ENCODE measurements at regions of chr9 and their contacts with region 1.

Region 1: GRCh38 chr9:113876151-113876992 is at the start of gene ZNF618:
- DNase-seq: peak; percentile 55 to 81
- ATAC-seq: peak; percentile 47
- H3K4me3 ChIP-seq: peak within 1 kb of the TSS; percentile 93 to 100
- H3K27ac ChIP-seq: no peak within 1 kb of the TSS
- H3K4me1 ChIP-seq: peaks cover 0 to 3% of the 10 kb centered on the region in 2 donors
- H3K27me3 ChIP-seq: no peaks in the 10 kb centered on the region
- total RNA-seq, gene ZNF618: 15.4 to 17.3 TPM

Region 2: DNA sequence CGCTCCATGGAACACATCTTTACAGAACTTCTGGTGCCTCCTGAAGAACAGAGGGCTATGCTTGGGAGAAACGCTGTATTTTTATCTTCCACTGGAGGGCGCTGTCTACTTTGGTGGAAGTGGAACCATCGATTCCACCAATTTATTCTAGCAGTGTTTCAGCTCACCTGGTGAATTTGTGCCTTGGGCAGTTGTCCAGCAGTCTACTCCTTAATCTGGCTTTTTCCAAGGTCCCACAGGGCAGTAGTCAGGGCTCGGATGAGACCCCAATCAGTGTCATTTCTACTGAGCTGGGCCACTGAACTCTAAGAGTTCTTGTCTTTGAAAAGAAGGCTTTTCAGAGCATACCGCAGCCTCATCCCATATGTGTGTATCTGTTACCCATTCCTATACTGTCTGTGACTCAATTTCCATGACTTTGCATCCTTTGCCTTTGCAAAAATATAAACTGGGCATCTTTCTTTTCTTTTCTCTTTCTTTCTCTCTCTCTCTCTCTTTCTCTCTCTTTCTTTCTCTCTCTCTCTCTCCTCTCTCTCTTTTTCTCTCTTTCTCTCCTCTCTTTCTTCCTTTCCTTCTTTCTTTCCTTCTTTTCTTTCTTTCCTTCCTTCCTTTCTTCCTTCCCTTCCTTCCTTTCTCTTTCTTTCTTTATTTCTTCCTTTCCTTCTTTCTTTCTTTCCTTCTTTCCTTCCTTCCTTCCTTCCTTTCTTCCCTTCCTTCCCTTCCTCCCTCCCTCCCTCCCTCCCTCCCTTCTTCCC is 138.7 kb before region 1 on chr9:
- intact Hi-C with region 1: loop called (anchors 2 to 5 kb)
- DNase-seq: no peak
- ATAC-seq: peak; percentile 56
- H3K4me3 ChIP-seq: no peak overlapping the region
- H3K27ac ChIP-seq: no peak overlapping the region
- H3K4me1 ChIP-seq: no peaks in the 10 kb centered on the region
- H3K27me3 ChIP-seq: no peaks in the 10 kb centered on the region

Region 3: GRCh38 chr9:113807173-113808061 is 69.0 kb before region 1 on chr9:
- intact Hi-C with region 1: loop called in 1 of 2 experiments (anchors 1 kb)
- DNase-seq: peak in 1 of 2 donors; percentile 62
- ATAC-seq: peak; percentile 89
- H3K4me3 ChIP-seq: no peak overlapping the region
- H3K27ac ChIP-seq: peak overlapping the region in 1 of 2 donors; percentile 14
- H3K4me1 ChIP-seq: no peaks in the 10 kb centered on the region
- H3K27me3 ChIP-seq: no peaks in the 10 kb centered on the region

Region 4: DNA sequence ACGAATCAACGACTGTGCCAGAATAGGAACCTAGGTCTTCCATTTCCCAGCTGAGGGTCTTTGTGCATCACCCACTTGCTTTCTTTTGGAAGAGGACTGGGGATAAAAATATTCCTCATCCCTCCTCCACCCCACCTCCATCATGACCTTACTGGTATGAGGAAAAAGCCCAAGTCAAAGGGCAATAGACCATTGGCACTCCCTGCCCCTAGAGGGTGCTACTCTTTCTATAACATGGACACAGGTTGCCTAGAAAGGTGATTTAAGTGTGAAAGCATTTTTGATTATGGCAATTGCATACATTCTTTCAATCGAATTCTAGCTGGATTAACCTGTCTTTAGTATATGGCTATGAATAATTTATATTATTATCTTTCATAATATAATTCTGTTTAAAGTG is 23.0 kb before region 1 on chr9:
- intact Hi-C with region 1: no loop called
- DNase-seq: no peak
- ATAC-seq: no peak
- H3K4me3 ChIP-seq: no peak overlapping the region
- H3K27ac ChIP-seq: no peak overlapping the region
- H3K4me1 ChIP-seq: no peaks in the 10 kb centered on the region
- H3K27me3 ChIP-seq: no peaks in the 10 kb centered on the region

Region 5: DNA sequence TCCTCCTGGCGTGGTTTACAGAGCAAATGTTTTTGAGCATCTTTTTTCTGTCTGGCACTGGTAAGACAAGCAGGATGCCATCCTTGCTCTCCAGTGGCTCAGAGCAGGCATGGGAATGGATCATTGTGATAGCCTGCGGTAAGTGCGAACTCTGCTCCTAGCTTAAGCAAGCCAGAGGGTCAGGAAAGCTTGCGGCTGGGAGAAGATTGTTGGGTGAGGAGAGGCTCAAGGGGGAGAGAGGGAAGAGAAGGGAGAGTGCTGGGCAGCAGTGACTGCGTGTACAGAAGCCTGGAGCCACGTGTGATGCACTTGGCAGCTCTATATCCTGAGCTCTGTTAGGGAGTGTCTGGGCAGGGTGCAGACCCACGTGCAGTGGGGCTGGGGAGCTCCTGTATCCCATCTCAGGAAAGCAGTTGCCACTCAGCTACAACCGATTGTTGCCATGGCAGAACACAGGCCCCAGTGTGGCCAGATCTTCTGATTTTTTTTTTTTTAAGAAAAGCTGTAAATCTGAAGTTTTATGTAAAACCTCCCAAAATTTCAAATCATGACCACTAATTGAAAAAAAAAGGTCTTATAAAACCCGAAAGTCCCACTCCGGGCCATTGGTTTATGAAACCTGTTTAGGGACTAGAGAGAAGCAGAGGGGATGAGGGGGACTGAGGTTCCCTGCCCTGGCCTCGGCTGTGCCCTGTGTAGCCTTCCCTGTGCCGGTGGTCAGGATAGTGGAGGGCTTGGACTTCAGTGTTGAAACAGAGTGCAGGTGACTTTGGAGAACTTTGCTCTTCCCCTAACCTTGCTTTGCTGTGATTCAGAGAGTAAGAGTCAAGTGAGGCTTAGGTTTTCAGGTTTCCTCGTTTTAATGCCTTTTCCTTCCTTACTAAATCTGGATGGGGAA is 67.0 kb after region 1 on chr9:
- intact Hi-C with region 1: no loop called
- DNase-seq: no peak
- ATAC-seq: peak; percentile 29
- H3K4me3 ChIP-seq: no peak overlapping the region
- H3K27ac ChIP-seq: no peak overlapping the region
- H3K4me1 ChIP-seq: no peaks in the 10 kb centered on the region
- H3K27me3 ChIP-seq: no peaks in the 10 kb centered on the region

Region 6: GRCh38 chr9:113957821-113958341 is 81.5 kb after region 1 on chr9:
- intact Hi-C with region 1: loop called in 1 of 2 experiments (anchors 5 kb)
- DNase-seq: no peak
- ATAC-seq: no peak
- H3K4me3 ChIP-seq: no peak overlapping the region
- H3K27ac ChIP-seq: no peak overlapping the region
- H3K4me1 ChIP-seq: peaks cover 9 to 10% of the 10 kb centered on the region in 2 donors
- H3K27me3 ChIP-seq: no peaks in the 10 kb centered on the region

Region 7: GRCh38 chr9:113993838-113994540 is 117.6 kb after region 1 on chr9:
- intact Hi-C with region 1: loop called in 1 of 2 experiments (anchors 10 kb)
- DNase-seq: peak; percentile 95
- ATAC-seq: peak; percentile 69
- H3K4me3 ChIP-seq: no peak overlapping the region
- H3K27ac ChIP-seq: no peak overlapping the region
- H3K4me1 ChIP-seq: peaks cover 0 to 8% of the 10 kb centered on the region in 2 donors
- H3K27me3 ChIP-seq: no peaks in the 10 kb centered on the region

Measured in aorta (tissue), 5 donors.